Dorsolateral prefrontal cortex (tissue), 120 donors: ENCODE measurements at regions of chr15 and their contacts with region 1.

Region 1: GRCh38 chr15:68614286-68615035 is 35.7 kb downstream of the CORO2B start:
- DNase-seq: peak; percentile 59 to 99 (median 96)
- H3K4me3 ChIP-seq: peak overlapping the region in 37 of 59 donors; percentile 1 to 49 (median 30)
- H3K27ac ChIP-seq: peak overlapping the region; percentile 87 to 100 (median 98)
- H3K27me3 ChIP-seq: no peaks in the 10 kb centered on the region
- CTCF ChIP-seq: peak in 15 of 56 donors; percentile 4 to 38 (median 19)

Region 2: GRCh38 chr15:68578174-68578979 is 36.1 kb before region 1 on chr15:
- intact Hi-C with region 1: loop called in 1 of 2 experiments (anchors 2 kb)
- DNase-seq: peak; percentile 72 to 89 (median 80)
- H3K4me3 ChIP-seq: peak overlapping the region; percentile 54 to 89 (median 77)
- H3K27ac ChIP-seq: peak overlapping the region; percentile 65 to 98 (median 96)
- H3K27me3 ChIP-seq: no peaks in the 10 kb centered on the region
- CTCF ChIP-seq: peak in 55 of 56 donors; percentile 49 to 94 (median 74)

Region 3: DNA sequence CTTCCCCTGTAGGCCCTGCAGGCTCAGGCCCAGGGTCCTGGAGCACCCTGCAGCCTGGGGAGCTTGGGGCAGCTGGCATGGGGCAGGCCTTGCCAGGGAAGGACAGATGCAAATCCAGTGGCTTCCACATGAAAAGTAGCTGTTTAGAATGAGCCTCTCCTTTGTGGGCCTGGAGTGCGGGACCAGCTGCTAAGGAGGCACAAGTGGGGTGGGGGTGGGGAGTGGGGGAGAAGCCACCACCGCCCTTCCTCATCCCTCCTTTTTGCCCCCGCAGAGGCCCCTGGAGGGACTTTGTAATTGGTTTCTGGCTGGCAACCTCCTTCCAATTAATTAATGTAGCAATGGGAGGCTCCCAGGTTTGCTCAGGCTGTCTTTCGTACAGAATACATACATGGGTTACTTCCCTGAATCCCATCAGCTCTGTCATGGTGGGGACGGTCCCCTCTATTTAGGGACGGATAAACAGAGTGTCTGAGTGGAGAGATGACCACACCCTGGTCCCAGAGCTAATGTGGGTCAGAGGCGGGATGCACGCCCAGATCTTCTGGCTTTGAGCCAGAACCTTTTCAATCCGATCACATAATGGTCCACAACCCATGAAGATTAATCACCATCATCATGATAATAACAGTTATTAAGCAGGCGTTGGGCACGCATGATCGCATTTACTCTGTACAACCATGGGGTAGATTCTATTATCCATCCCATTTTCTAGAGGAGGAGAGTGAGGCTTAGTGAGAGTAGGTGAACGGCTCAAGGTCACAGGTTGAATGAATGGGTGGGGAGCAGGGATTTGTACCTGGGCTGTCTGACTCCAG is 29.5 kb before region 1 on chr15:
- intact Hi-C with region 1: loop called (anchors 1 to 2 kb)
- DNase-seq: peak in 3 of 10 donors; percentile 19 to 40 (median 28)
- H3K4me3 ChIP-seq: peak overlapping the region in 4 of 59 donors; percentile 12 to 31 (median 12)
- H3K27ac ChIP-seq: peak overlapping the region; percentile 67 to 98 (median 96)
- H3K27me3 ChIP-seq: no peaks in the 10 kb centered on the region
- CTCF ChIP-seq: peak in 1 of 56 donors; percentile 0

Region 4: DNA sequence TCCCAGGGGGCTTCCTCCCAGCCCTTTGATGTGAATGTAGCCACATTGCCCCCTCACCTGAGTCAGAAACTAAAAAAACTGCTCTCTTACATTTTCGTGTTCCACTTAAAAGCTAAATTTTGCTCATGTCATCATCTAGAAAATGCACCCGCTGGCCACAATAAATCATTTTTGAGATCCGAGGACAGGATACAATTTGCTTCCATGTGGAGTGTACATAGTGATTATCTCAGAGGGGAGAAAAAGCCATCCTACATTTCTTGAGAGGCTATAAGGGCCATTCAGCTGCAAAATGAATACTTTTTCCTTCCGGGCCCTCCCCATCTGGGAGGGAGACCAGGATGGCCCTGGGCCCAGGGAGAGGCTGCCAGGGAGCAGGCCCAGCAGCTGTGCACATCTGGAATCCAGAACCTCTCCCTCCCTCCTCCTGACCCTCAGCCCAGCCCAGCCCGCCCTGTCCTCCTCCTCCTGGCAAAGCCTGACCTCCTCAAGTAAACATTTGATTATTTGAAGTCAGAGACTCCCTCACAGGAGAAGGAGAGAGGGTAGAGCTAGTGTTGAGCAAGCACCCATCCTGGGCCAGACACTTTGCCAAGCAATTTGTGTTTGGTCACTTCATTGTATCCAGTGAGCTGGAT is 23.4 kb after region 1 on chr15:
- intact Hi-C with region 1: loop called in 1 of 2 experiments (anchors 2 kb)
- DNase-seq: no peak
- H3K4me3 ChIP-seq: no peak overlapping the region
- H3K27ac ChIP-seq: peak overlapping the region in 48 of 59 donors; percentile 1 to 92 (median 70)
- H3K27me3 ChIP-seq: no peaks in the 10 kb centered on the region
- CTCF ChIP-seq: no peak

Region 5: GRCh38 chr15:68650901-68651709 is 36.6 kb after region 1 on chr15:
- intact Hi-C with region 1: loop called (anchors 2 to 5 kb)
- DNase-seq: peak in 7 of 10 donors; percentile 44 to 66 (median 63)
- H3K4me3 ChIP-seq: peak overlapping the region in 2 of 59 donors; percentile 8 to 21
- H3K27ac ChIP-seq: peak overlapping the region; percentile 42 to 98 (median 92)
- H3K27me3 ChIP-seq: no peaks in the 10 kb centered on the region
- CTCF ChIP-seq: peak; percentile 24 to 80 (median 66)